ENCODE measurements at regions of chr2 and their contacts with region 1.

Region 1: DNA sequence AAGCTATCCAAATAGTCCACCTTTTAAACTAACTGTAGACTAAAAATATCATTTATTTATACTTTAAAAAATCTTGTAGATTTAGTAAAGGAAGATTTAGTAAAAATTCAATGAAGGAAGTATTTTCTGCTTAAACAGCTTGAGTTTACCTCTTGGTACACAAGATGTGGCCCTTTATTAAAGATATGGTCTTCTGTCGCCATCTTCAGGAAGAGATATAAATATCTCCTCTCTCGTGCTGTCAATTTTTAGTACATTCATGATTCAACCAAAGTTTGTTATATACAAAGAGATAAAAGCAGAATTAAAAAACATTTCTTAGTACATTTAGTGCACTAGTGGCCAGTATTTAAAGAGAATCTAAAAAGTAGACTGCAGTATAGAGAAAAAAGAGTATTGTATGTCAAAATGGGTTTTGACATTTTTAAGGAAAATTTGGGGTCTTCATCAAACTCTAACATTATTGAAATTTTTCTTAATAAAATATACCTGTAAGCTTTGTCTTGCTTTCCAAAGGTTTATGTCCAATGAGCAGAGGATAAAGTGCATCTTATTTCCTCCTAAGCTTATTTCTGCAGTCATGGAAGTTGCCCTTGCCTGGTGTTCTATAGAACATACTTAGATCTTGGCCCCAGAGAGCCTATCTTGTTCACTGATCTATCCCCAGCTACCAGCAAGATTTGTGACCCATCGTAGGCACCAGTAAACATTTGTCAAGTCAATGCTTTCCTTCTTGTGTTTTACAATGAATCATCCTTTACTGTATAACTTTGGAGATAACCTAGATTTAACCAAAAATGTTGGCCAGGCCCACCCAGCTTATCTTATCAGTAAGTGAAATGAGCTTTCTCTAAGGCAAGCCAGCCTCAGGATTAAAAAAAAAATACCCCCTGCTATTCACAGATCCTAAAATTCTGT is 18.5 kb upstream of the EML6 start:
- DNase-seq: no peak
- H3K4me3 Mint-ChIP-seq: no peak overlapping the region
- H3K27ac Mint-ChIP-seq: no peak overlapping the region
- H3K4me1 Mint-ChIP-seq: peaks cover 12% of the 10 kb centered on the region
- H3K27me3 Mint-ChIP-seq: peaks cover 14% of the 10 kb centered on the region

Region 2: DNA sequence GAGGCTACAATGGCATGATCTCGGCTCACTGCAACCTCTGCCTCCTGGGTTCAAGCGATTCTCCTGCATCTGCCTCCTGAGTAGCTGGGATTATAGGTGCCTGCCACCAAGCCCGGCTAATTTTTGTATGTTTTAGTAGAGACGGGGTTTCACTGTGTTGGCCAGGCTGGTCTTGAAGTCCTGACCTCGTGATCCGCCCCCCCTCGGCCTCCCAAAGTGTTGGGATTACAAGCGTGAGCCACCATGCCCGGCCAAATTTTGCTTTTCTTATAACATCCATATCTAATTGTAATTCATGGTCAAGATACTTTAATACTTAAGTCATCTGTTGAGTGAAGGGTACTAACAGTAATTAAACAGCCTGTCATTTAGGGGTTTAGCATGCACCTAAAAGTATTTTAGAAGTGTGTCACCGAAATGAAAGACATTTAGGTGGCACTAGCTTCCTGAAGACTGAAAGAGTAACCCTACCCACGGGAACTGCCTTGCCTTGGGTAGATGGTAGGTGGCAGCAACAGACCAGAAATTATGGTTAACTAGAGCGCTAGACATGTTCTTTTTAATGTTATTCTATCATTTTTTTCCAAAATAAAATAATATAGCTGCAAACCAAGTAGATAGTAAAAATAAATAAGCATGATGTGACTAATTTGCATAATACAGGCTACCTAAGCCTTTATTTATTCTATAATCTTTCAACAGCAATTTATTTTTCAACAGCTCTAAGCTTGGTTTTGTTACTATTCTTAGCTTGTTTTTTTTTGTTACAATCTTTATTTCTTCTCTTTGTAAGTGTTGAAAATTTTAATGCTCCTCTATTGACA is 598.1 kb before region 1 on chr2:
- CTCF ChIA-PET with region 1: interaction called, 21 read pairs
- intact Hi-C with region 1: loop called (anchors 1 kb)
- DNase-seq: peak; percentile 71
- H3K4me3 Mint-ChIP-seq: no peak overlapping the region
- H3K27ac Mint-ChIP-seq: no peak overlapping the region
- H3K4me1 Mint-ChIP-seq: peaks cover 7% of the 10 kb centered on the region
- H3K27me3 Mint-ChIP-seq: no peaks in the 10 kb centered on the region

Region 3: GRCh38 chr2:54206596-54206995 is 498.4 kb before region 1 on chr2:
- CTCF ChIA-PET with region 1: no interaction called
- intact Hi-C with region 1: loop called (anchors 5 kb)
- DNase-seq: no peak
- H3K4me3 Mint-ChIP-seq: no peak overlapping the region
- H3K27ac Mint-ChIP-seq: no peak overlapping the region
- H3K4me1 Mint-ChIP-seq: peaks cover 3% of the 10 kb centered on the region
- H3K27me3 Mint-ChIP-seq: no peaks in the 10 kb centered on the region

Region 4: GRCh38 chr2:54510916-54511315 is 194.0 kb before region 1 on chr2:
- CTCF ChIA-PET with region 1: no interaction called
- intact Hi-C with region 1: no loop called
- DNase-seq: no peak
- H3K4me3 Mint-ChIP-seq: no peak overlapping the region
- H3K27ac Mint-ChIP-seq: no peak overlapping the region
- H3K4me1 Mint-ChIP-seq: no peaks in the 10 kb centered on the region
- H3K27me3 Mint-ChIP-seq: no peaks in the 10 kb centered on the region

Region 5: GRCh38 chr2:54522624-54523281 is 182.2 kb before region 1 on chr2:
- CTCF ChIA-PET with region 1: interaction called, 131 read pairs
- intact Hi-C with region 1: loop called (anchors 1 kb)
- DNase-seq: peak; percentile 73
- H3K4me3 Mint-ChIP-seq: no peak overlapping the region
- H3K27ac Mint-ChIP-seq: no peak overlapping the region
- H3K4me1 Mint-ChIP-seq: peaks cover 15% of the 10 kb centered on the region
- H3K27me3 Mint-ChIP-seq: no peaks in the 10 kb centered on the region

Region 6: GRCh38 chr2:54665436-54665856 is 39.5 kb before region 1 on chr2:
- CTCF ChIA-PET with region 1: interaction called, 77 read pairs
- intact Hi-C with region 1: loop called (anchors 1 kb)
- DNase-seq: peak; percentile 73
- H3K4me3 Mint-ChIP-seq: no peak overlapping the region
- H3K27ac Mint-ChIP-seq: no peak overlapping the region
- H3K4me1 Mint-ChIP-seq: no peaks in the 10 kb centered on the region
- H3K27me3 Mint-ChIP-seq: no peaks in the 10 kb centered on the region

Region 7: GRCh38 chr2:54691445-54692135 is 13.4 kb before region 1 on chr2:
- CTCF ChIA-PET with region 1: interaction called, 30 read pairs
- intact Hi-C with region 1: no loop called
- DNase-seq: no peak
- H3K4me3 Mint-ChIP-seq: no peak overlapping the region
- H3K27ac Mint-ChIP-seq: no peak overlapping the region
- H3K4me1 Mint-ChIP-seq: peaks cover 5% of the 10 kb centered on the region
- H3K27me3 Mint-ChIP-seq: peaks cover 8% of the 10 kb centered on the region

Region 8: GRCh38 chr2:54787755-54788366 is 82.9 kb after region 1 on chr2:
- CTCF ChIA-PET with region 1: no interaction called
- intact Hi-C with region 1: no loop called
- DNase-seq: no peak
- H3K4me3 Mint-ChIP-seq: no peak overlapping the region
- H3K27ac Mint-ChIP-seq: no peak overlapping the region
- H3K4me1 Mint-ChIP-seq: no peaks in the 10 kb centered on the region
- H3K27me3 Mint-ChIP-seq: no peaks in the 10 kb centered on the region

Region 9: GRCh38 chr2:55010149-55010591 is 305.2 kb after region 1 on chr2:
- CTCF ChIA-PET with region 1: interaction called, 3 read pairs
- intact Hi-C with region 1: loop called (anchors 5 kb)
- DNase-seq: peak; percentile 54
- H3K4me3 Mint-ChIP-seq: peak overlapping the region; percentile 77
- H3K27ac Mint-ChIP-seq: peak overlapping the region; percentile 55
- H3K4me1 Mint-ChIP-seq: peaks cover 56% of the 10 kb centered on the region
- H3K27me3 Mint-ChIP-seq: no peaks in the 10 kb centered on the region